Sigmoid colon (tissue), 7 donors: ENCODE measurements at regions of chr5 and their contacts with region 1.

Region 1: GRCh38 chr5:133111299-133111698 is 59.5 kb downstream of the HSPA4 start:
- DNase-seq: peak; percentile 90
- H3K4me3 ChIP-seq: no peak overlapping the region
- H3K27ac ChIP-seq: no peak overlapping the region
- H3K4me1 ChIP-seq: peaks cover 0 to 8% (median 3%) of the 10 kb centered on the region in 4 donors
- H3K27me3 ChIP-seq: peaks cover 0 to 4% (median 0%) of the 10 kb centered on the region in 3 donors
- CTCF ChIP-seq: peak; percentile 77 to 90 (median 86)
- EP300 ChIP-seq: no peak
- POLR2A ChIP-seq: no peak

Region 2: GRCh38 chr5:133287500-133287899 is 176.2 kb after region 1 on chr5:
- intact Hi-C with region 1: loop called (anchors 1 kb)
- DNase-seq: no peak
- H3K4me3 ChIP-seq: no peak overlapping the region
- H3K27ac ChIP-seq: no peak overlapping the region
- H3K4me1 ChIP-seq: peaks cover 0 to 6% (median 0%) of the 10 kb centered on the region in 4 donors
- H3K27me3 ChIP-seq: no peaks in the 10 kb centered on the region
- CTCF ChIP-seq: peak in 3 of 4 experiments; percentile 9 to 34 (median 17)
- EP300 ChIP-seq: no peak
- POLR2A ChIP-seq: no peak